ENCODE measurements at regions of chr3 and their contacts with region 1.

Region 1: GRCh38 chr3:155664925-155665695 is 79.8 kb downstream of the PLCH1 start:
- DNase-seq: peak in 4 of 10 donors; percentile 12 to 85 (median 25)

Region 2: GRCh38 chr3:155676252-155676981 is 11.3 kb after region 1 on chr3:
- intact Hi-C with region 1: loop called (anchors 1 kb)
- DNase-seq: peak in 9 of 10 donors; percentile 26 to 93 (median 52)